OCI-LY7 (cell line): ENCODE measurements at regions of chr4 and their contacts with region 1.

Region 1: GRCh38 chr4:75653845-75654503 is 19.2 kb downstream of the G3BP2 start:
- DNase-seq: no peak
- H3K4me3 ChIP-seq: no peak overlapping the region
- H3K27ac ChIP-seq: no peak overlapping the region
- H3K4me1 ChIP-seq: peaks cover 16% of the 10 kb centered on the region
- CTCF ChIP-seq: peak; percentile 68

Region 2: GRCh38 chr4:75817901-75818300 is 163.9 kb after region 1 on chr4:
- CTCF ChIA-PET with region 1: no interaction called
- POLR2A ChIA-PET with region 1: no interaction called
- intact Hi-C with region 1: loop called (anchors 10 kb)
- DNase-seq: no peak
- H3K4me3 ChIP-seq: no peak overlapping the region
- H3K27ac ChIP-seq: no peak overlapping the region
- H3K4me1 ChIP-seq: no peaks in the 10 kb centered on the region
- CTCF ChIP-seq: no peak